ENCODE measurements at regions of chr1 and their contacts with region 1.

Region 1: DNA sequence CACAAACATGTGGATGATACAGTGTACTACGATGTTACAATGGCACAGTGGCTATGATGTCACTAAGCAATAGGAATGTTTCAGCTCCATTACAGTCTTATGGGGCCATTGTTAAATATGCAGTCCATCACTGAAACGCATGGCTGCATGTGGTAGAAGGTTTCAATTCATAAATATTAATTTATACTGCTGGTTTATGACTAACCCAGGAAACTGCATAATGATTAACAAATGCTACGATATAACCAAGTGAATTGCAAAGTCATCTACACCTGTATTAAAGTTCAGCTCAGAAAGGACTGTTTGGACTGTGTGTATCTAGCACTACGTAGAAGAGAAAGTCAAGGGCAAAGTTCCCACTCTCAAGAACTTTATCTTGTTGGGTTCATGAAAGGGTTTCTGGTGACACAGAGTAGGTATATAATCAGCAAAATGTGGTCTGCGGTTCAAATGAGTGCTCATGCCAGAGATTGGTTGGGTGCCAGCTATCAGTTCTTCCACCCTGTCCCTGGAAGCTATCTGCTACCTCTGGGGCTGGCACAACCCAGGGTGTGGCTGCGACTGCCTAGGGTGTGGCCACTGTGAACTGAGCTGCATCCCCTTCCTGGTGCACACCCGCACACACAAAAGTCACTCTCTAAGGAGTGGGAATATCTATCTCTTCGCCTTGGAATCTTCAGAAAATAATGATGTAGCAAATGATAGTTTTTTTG is 14.8 kb downstream of the MGST3 start:
- DNase-seq: no peak
- H3K4me3 ChIP-seq: no peak overlapping the region
- H3K27ac ChIP-seq: no peak overlapping the region
- H3K4me1 ChIP-seq: peaks cover 0 to 3% (median 0%) of the 10 kb centered on the region in 4 experiments; a peak in 1 of 7 replicates
- H3K27me3 ChIP-seq: no peaks in the 10 kb centered on the region
- CTCF ChIP-seq: no peak
- EP300 ChIP-seq: no peak
- POLR2A ChIP-seq: no peak
- RAD21 ChIP-seq: no peak

Region 2: GRCh38 chr1:165586435-165586834 is 59.4 kb before region 1 on chr1:
- CTCF ChIA-PET with region 1: no interaction called
- POLR2A ChIA-PET with region 1: no interaction called
- DNase-seq: no peak
- H3K4me3 ChIP-seq: no peak overlapping the region
- H3K27ac ChIP-seq: no peak overlapping the region
- H3K4me1 ChIP-seq: no peaks in the 10 kb centered on the region
- H3K27me3 ChIP-seq: no peaks in the 10 kb centered on the region
- CTCF ChIP-seq: no peak
- EP300 ChIP-seq: no peak
- POLR2A ChIP-seq: no peak
- RAD21 ChIP-seq: no peak

Region 3: DNA sequence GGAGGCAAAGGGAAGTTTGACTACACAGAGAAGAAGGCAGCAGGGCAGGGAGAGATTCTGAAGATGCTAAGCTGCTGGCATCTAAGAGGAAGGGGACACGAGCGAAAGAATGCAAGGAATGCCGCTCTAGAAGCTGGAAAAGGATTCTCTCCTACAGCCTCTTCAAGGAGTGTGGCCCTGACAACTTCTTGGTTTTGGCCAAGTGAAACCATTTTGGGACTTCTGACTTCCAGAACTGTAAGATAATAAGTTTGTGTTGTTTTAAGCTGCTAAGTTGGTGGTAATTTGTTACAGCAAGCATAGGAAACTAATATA is 13.7 kb after region 1 on chr1:
- CTCF ChIA-PET with region 1: interaction called, 7 read pairs
- POLR2A ChIA-PET with region 1: interaction called, 15 read pairs
- DNase-seq: peak in 1 of 2 experiments; percentile 10
- H3K4me3 ChIP-seq: no peak overlapping the region
- H3K27ac ChIP-seq: 0 out of 2 replicates have a peak overlapping the region, but pooled peaks have one; percentile 22
- H3K4me1 ChIP-seq: no peaks in the 10 kb centered on the region; a peak in 1 of 7 replicates
- H3K27me3 ChIP-seq: no peaks in the 10 kb centered on the region
- CTCF ChIP-seq: no peak
- EP300 ChIP-seq: no peak
- POLR2A ChIP-seq: no peak
- RAD21 ChIP-seq: no peak

Region 4: DNA sequence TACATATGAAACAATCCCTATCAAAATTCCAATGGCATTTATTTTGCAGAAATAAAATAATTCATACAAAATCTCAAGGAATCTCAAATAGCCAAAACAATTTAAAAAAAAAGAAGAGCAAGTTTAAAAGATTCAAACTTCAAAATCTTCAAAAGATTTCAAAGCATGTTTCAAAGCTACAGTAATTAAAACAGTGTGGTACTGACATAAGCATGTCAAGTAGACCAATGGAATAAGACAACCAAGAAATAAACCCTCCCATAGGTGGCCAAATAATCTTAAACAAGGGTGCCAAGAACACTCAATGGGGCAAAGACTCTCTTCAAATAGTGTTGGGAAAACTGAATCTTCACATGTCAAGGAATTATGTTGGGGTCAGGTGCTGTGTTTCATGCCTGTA is 153.6 kb after region 1 on chr1:
- CTCF ChIA-PET with region 1: no interaction called
- POLR2A ChIA-PET with region 1: no interaction called
- DNase-seq: no peak
- H3K4me3 ChIP-seq: no peak overlapping the region
- H3K27ac ChIP-seq: no peak overlapping the region
- H3K4me1 ChIP-seq: no peaks in the 10 kb centered on the region
- H3K27me3 ChIP-seq: no peaks in the 10 kb centered on the region
- CTCF ChIP-seq: no peak
- EP300 ChIP-seq: no peak
- POLR2A ChIP-seq: no peak
- RAD21 ChIP-seq: no peak

Region 5: DNA sequence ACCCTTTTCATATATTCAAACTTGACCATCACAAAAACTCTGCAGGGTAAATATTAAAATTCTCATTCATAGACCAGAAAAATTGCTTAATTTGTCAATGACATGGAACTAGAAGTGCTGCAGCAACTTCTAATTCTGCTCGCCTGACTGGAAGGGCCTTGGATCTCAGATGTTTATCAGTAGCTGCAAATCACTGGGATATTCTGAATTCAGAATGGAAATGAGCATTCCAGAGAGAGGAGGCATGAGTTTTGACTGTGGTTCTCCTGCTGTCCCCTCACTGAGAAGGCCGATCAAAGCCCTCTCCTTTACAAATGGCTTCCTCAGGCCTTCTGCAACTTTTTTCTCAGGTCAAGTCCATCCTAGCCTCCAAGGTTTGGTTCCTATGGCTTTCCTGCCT is 692.3 kb after region 1 on chr1:
- CTCF ChIA-PET with region 1: no interaction called
- POLR2A ChIA-PET with region 1: no interaction called
- DNase-seq: no peak
- H3K4me3 ChIP-seq: no peak overlapping the region
- H3K27ac ChIP-seq: no peak overlapping the region
- H3K4me1 ChIP-seq: no peaks in the 10 kb centered on the region
- H3K27me3 ChIP-seq: no peaks in the 10 kb centered on the region
- CTCF ChIP-seq: no peak
- EP300 ChIP-seq: no peak
- POLR2A ChIP-seq: no peak
- RAD21 ChIP-seq: no peak

Measured in H1 (cell line).